Sigmoid colon (tissue), 7 donors: ENCODE measurements at regions of chr20 and their contacts with region 1.

Region 1: GRCh38 chr20:5788385-5788895 is 38.2 kb downstream of the SHLD1 start:
- DNase-seq: peak; percentile 86
- H3K4me3 ChIP-seq: no peak overlapping the region
- H3K27ac ChIP-seq: no peak overlapping the region
- H3K4me1 ChIP-seq: peaks cover 0 to 15% (median 8%) of the 10 kb centered on the region in 4 donors
- H3K27me3 ChIP-seq: no peaks in the 10 kb centered on the region
- CTCF ChIP-seq: peak; percentile 77 to 91 (median 82)
- EP300 ChIP-seq: no peak
- POLR2A ChIP-seq: no peak

Region 2: GRCh38 chr20:5569021-5569420 is 219.4 kb before region 1 on chr20:
- intact Hi-C with region 1: loop called (anchors 1 kb)
- DNase-seq: no peak
- H3K4me3 ChIP-seq: no peak overlapping the region
- H3K27ac ChIP-seq: no peak overlapping the region
- H3K4me1 ChIP-seq: no peaks in the 10 kb centered on the region
- H3K27me3 ChIP-seq: no peaks in the 10 kb centered on the region
- CTCF ChIP-seq: peak in 3 of 4 experiments; percentile 44 to 54 (median 53)
- EP300 ChIP-seq: no peak
- POLR2A ChIP-seq: no peak

Region 3: DNA sequence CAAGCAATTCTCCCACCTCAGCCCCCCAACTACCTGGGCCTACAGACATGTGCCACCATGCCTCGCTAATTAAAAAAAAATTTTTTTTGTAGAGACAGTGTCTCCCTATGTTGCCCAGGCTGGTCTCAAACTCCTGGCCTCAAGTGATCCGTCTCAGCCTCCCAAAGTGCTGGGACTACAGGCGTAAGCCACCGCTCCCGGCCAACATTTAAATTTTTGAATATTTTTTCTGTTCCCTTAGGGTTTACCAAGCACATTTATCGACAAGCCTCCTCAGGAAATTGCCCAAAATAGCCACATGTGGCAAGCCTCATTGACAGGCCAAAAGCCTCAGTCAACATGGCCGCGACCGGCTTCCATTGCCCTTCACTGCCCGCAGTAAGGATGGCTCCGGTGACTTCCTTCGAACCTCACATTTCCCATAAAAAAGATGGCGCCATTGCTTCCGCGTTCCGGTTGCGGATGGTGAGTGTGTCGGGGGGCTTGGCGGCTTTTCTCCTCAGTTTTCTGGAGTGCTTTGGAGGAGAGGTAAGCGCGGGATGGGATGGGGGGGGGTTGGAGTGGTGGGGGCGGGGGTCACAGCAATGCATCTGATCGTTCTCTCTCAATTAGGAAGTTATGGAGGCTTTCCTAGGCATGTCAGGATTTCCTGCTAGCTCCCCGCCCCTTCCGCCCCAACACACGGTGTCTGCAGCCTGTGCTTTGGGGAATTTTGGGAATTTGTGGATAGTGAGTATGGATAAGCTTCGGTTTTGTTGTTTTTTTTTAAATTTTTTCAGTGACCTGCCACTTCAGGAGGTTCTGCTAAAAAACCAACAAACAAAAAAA is 38.3 kb before region 1 on chr20 and contains the start of gene SHLD1:
- intact Hi-C with region 1: no loop called
- DNase-seq: peak; percentile 90
- H3K4me3 ChIP-seq: peak within 1 kb of the TSS; percentile 54 to 64 (median 61)
- H3K27ac ChIP-seq: peak within 1 kb of the TSS; percentile 82 to 88 (median 86)
- H3K4me1 ChIP-seq: peaks cover 0 to 10% (median 6%) of the 10 kb centered on the region in 4 donors
- H3K27me3 ChIP-seq: no peaks in the 10 kb centered on the region
- CTCF ChIP-seq: no peak
- EP300 ChIP-seq: no peak
- POLR2A ChIP-seq: no peak
- total RNA-seq, gene SHLD1: 0.99 to 6.1 (median 3.4) TPM